Activated CD8-positive, alpha-beta T cell treated with anti-CD3 and anti-CD28 coated beads, Interleukin-2, amount 10 ng/mL, durations not matched to agents 7 days and 5 days (primary cell): ENCODE measurements at regions of chr12 and their contacts with region 1.

Region 1: DNA sequence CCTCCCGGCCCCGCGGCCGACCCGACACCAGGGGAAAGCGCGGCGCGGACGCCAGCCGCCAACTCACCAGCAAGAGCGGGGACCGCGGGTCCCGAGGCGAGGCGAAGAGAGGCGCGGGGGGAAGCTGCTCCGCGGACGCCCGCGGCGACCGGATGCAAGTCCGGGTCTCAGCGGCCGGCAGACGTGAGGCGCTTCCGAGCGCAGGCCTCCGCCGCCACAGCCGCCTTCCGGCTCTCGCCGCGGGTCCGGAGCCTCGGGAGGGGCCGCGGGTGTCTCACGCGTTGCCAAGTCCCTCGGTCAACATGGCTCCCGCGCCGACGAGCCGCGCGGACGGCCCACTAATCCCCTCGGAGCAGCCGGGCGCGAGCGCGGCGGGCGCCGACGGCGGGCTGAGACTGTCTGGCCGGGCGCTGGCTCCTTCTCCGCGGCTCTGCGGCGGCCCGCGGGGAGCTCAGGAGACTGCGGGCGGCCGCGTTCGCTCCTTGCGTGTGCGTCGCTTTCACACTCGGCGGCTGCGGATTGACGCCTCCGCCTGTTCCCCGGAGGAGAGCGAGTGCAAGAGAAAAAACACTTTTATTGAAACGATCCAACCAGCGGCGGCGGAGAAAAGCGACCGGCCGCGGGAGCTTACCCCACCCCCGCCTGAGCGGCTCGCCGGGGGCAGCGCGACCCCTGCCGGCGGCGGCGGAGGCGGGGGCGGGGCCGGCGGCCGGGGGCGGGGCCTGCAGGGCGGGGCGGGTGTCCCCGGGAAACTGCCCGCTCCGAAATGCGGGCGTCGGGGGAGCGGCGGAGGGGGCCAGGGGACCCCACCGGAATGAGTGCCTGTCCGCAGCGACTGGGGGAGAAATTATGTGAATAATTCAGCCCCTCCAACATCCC is at the start of gene CDK17:
- DNase-seq: peak; percentile 91
- ATAC-seq: peak; percentile 66
- H3K4me3 Mint-ChIP-seq: peak within 1 kb of the TSS; percentile 86
- H3K27ac Mint-ChIP-seq: peak within 1 kb of the TSS; percentile 96
- H3K4me1 Mint-ChIP-seq: peaks cover 50% of the 10 kb centered on the region
- H3K27me3 Mint-ChIP-seq: no peaks in the 10 kb centered on the region
- total RNA-seq, gene CDK17: 38.2 to 39.5 TPM

Region 2: DNA sequence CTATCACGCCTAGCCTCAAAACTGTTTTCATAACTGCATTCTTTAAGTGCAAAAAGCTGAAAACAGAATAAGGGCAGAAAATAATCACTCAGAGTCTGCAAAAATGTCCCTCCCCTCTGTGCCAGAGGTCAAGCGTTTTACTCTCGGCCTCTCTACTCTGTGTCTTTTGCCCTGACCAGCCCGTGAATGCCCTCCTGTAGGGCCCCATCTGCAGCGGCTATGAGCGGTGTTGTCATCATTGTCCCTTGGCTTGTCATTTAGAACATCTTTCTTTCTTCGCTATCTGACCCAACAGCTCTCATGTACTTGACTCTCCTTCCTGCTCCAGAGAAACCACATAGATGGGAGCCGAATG is 184.3 kb before region 1 on chr12:
- CTCF ChIA-PET with region 1: interaction called, 21 read pairs
- POLR2A ChIA-PET with region 1: interaction called, 4 read pairs
- DNase-seq: no peak
- ATAC-seq: no peak
- H3K4me3 Mint-ChIP-seq: no peak overlapping the region
- H3K27ac Mint-ChIP-seq: no peak overlapping the region
- H3K4me1 Mint-ChIP-seq: peaks cover 51% of the 10 kb centered on the region
- H3K27me3 Mint-ChIP-seq: no peaks in the 10 kb centered on the region

Region 3: DNA sequence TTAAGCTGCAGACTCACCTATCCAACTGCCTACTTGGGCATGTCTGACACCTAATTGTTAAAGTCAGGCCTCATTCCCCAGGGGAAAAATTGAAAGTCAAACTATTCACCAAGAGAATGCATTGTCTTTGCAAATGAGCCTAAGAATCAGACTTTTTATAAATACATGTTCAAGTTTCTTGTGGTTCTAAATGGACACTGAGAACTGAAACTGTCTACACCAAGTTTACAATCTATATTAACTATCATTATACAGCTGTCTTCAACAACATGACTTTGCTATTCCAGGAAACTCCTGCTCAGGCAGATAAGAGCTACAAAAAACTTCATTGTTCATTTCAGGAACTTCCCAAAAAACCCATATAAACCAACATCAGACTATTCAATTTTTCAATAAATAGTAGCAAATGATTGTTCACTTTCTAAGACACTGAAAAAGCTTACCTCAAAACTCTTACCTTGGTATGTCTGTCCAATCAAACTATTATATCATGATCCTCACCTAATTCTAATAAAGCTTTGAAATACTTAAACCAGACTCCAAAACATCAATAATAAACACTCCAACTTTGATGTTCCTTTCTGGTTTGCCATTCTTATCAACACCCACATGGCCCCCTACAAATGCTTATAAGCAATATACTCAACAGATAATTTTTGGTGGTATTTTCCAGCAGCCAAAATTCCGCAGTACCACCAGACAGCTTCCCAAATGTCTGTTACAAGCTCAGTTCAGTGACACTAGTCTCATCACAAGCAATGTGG is 24.1 kb before region 1 on chr12:
- CTCF ChIA-PET with region 1: interaction called, 16 read pairs
- POLR2A ChIA-PET with region 1: interaction called, 24 read pairs
- DNase-seq: no peak
- ATAC-seq: no peak
- H3K4me3 Mint-ChIP-seq: peak overlapping the region; percentile 22
- H3K27ac Mint-ChIP-seq: peak overlapping the region; percentile 52
- H3K4me1 Mint-ChIP-seq: peaks cover 77% of the 10 kb centered on the region
- H3K27me3 Mint-ChIP-seq: no peaks in the 10 kb centered on the region

Region 4: GRCh38 chr12:96427269-96427729 is 27.1 kb after region 1 on chr12:
- CTCF ChIA-PET with region 1: interaction called, 29 read pairs
- POLR2A ChIA-PET with region 1: interaction called, 8 read pairs
- DNase-seq: peak; percentile 45
- ATAC-seq: peak; percentile 51
- H3K4me3 Mint-ChIP-seq: no peak overlapping the region
- H3K27ac Mint-ChIP-seq: peak overlapping the region; percentile 35
- H3K4me1 Mint-ChIP-seq: peaks cover 44% of the 10 kb centered on the region
- H3K27me3 Mint-ChIP-seq: no peaks in the 10 kb centered on the region

Region 5: DNA sequence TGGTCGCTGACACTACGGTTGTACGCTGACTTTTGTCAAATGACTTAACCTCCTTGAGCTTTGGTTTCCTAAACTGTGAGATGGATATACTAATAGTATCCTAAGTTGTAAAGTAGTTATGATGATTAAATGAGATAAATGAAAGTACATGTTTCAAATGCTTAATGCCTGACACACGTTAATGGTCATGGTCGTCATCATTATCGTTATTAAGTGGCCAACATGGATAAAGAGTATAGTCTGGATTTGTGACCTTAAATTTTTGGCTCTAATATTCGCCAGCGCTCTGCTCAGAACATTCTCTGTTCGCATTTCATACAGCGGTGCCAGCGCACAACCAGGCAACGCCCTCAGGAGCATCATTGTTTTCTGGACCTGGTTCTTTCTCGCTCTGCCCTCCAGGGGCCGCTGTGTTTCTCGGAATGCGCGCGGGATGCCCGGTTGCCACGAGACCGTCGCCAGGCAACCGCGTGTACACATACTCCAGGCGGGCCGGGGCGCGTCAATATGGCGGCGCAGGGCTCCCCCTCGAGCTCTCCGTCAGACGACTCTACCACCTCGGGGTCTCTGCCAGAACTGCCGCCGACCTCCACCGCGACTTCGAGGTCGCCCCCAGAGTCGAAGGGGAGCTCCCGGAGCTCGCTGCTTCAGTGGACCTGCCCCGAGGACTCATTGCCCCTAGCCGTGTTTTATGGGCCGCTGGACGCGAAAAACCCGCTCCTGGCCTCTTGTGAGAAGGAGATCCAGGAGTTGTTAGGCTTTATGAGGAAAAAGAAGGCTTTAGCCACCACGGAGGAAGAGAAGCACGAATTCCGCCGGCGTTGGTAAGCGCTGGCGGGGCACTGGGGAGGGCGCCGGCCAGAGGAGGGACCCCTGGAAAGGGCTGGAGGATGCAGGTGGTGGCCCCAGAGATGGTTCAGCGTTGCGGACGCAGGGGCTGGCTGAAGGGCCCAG is 89.2 kb after region 1 on chr12 and contains the start of gene CFAP54:
- CTCF ChIA-PET with region 1: interaction called, 55 read pairs
- POLR2A ChIA-PET with region 1: interaction called, 26 read pairs
- DNase-seq: peak; percentile 96
- ATAC-seq: peak; percentile 84
- H3K4me3 Mint-ChIP-seq: peak within 1 kb of the TSS; percentile 86
- H3K27ac Mint-ChIP-seq: peak within 1 kb of the TSS; percentile 53
- H3K4me1 Mint-ChIP-seq: peaks cover 35% of the 10 kb centered on the region
- H3K27me3 Mint-ChIP-seq: peaks cover 12% of the 10 kb centered on the region
- total RNA-seq, gene CFAP54: 0.18 to 1.2 TPM

Region 6: GRCh38 chr12:96571101-96571862 is 171.1 kb after region 1 on chr12:
- CTCF ChIA-PET with region 1: no interaction called
- POLR2A ChIA-PET with region 1: no interaction called
- DNase-seq: no peak
- ATAC-seq: peak; percentile 61
- H3K4me3 Mint-ChIP-seq: peak overlapping the region; percentile 49
- H3K27ac Mint-ChIP-seq: no peak overlapping the region
- H3K4me1 Mint-ChIP-seq: peaks cover 11% of the 10 kb centered on the region
- H3K27me3 Mint-ChIP-seq: peaks cover 15% of the 10 kb centered on the region

Region 7: DNA sequence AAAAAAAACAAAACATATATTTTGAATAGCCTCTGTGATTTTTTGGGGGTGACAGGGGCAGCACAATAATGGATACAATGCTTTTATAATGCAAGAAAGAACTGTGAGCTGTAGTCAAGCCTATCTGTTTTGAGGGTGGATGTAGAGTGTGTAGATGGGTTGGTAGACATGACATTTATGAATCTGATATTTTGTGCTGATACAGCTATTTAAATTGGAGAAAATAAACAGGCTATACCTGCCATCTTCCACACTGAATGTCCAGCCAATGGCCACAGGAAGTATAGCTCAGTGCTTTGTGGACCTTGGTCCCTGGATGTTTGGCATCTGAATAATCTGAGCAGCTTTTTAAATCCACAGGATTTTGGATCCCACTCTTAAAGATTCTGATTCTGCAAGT is 681.9 kb after region 1 on chr12:
- CTCF ChIA-PET with region 1: no interaction called
- POLR2A ChIA-PET with region 1: no interaction called
- DNase-seq: no peak
- ATAC-seq: no peak
- H3K4me3 Mint-ChIP-seq: no peak overlapping the region
- H3K27ac Mint-ChIP-seq: no peak overlapping the region
- H3K4me1 Mint-ChIP-seq: no peaks in the 10 kb centered on the region
- H3K27me3 Mint-ChIP-seq: no peaks in the 10 kb centered on the region